HCT116 (cell line): ENCODE measurements at regions of chr3 and their contacts with region 1.

Region 1: DNA sequence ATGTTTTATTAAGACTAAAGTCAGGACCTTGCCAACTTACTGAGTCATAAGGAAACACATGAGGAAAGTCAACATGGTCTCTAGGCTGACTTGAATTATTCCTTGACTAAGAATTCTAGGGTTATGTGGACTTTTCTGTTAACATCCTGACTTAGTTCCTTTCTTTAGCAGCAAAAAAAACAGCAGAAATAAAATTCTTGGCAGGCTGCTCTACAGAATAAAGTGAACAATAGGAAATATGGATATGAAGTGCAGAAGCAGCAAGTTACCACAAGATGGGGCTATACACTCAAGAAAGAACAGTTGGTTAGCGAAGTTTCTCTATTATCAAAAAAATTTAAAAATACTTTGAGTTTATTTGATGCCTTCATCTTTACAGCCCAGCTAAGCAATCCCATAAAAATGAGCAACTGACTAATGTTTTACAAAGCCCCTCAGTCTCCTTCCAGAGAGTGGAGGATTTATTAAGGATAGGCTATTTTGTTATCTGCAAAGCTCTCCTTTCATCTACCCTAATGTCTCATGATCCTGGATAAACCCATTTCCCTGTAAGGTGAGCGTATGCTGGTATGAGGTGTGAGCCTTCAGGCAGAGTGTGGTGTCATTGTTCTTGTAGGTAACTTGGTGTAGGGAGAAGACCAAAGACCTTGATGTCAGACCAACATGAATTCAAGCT is 23.1 kb upstream of the MCCC1 start:
- DNase-seq: peak; percentile 38
- ATAC-seq: peak; percentile 67
- H3K4me3 ChIP-seq: no peak overlapping the region
- H3K27ac ChIP-seq: no peak overlapping the region
- H3K4me1 ChIP-seq: no peaks in the 10 kb centered on the region
- H3K27me3 ChIP-seq: peaks cover 1% of the 10 kb centered on the region; the same call in 1 of the 2 replicates
- CTCF ChIP-seq: peak; percentile 67 to 88 (median 87)
- POLR2A ChIP-seq: no peak
- RAD21 ChIP-seq: peak; percentile 93

Region 2: DNA sequence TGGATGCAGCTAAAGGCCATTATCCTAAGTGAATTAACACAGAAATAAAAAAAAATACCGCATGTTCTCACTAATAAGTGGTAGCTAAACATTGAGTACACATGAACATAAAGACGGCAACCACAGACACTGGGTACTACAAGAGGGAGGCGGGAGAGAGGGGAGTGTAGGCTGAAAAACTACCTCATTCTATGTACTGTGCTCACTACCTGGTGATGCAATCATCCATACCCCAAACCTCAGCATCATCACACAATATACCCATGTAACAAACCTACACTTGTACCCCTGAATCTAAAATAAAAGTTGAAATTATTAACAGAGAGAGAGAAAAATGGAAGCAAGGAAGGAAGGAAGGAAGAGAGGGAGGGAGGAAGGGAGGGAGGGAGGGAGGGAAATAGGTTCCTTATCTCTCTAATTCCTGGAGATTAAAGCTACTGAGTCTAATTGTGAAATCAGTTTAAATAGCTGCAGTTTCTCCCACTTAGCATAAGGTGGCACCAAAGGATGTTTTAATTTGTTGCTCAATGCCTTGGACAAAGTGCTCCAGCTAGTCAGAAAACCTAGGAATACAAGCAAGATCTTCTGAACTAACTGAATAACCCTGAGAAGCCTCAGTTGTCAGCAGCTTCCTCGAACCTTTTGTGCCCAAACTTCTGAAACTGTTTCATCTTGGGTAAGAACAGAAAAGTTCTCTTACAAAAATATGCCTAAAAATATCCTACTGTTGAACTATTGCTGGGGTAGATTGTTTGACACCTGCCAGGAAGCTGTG is 408.5 kb before region 1 on chr3:
- CTCF ChIA-PET with region 1: interaction called, 5 read pairs
- POLR2A ChIA-PET with region 1: no interaction called
- RAD21 ChIA-PET with region 1: no interaction called
- intact Hi-C with region 1: loop called (anchors 1 kb)
- DNase-seq: peak; percentile 60
- ATAC-seq: peak; percentile 79
- H3K4me3 ChIP-seq: no peak overlapping the region
- H3K27ac ChIP-seq: no peak overlapping the region
- H3K4me1 ChIP-seq: no peaks in the 10 kb centered on the region
- H3K27me3 ChIP-seq: no peaks in the 10 kb centered on the region
- CTCF ChIP-seq: peak; percentile 57 to 66 (median 58); a peak in 5 of 6 replicates
- POLR2A ChIP-seq: no peak
- RAD21 ChIP-seq: peak; percentile 91

Region 3: GRCh38 chr3:183013856-183014255 is 108.5 kb before region 1 on chr3:
- CTCF ChIA-PET with region 1: no interaction called
- POLR2A ChIA-PET with region 1: no interaction called
- RAD21 ChIA-PET with region 1: no interaction called
- intact Hi-C with region 1: no loop called
- DNase-seq: no peak
- ATAC-seq: no peak
- H3K4me3 ChIP-seq: no peak overlapping the region
- H3K27ac ChIP-seq: no peak overlapping the region
- H3K4me1 ChIP-seq: no peaks in the 10 kb centered on the region
- H3K27me3 ChIP-seq: no peaks in the 10 kb centered on the region
- CTCF ChIP-seq: no peak
- POLR2A ChIP-seq: no peak
- RAD21 ChIP-seq: no peak

Region 4: GRCh38 chr3:183178629-183179549 is 56.5 kb after region 1 on chr3:
- CTCF ChIA-PET with region 1: interaction called, 11 read pairs
- POLR2A ChIA-PET with region 1: no interaction called
- RAD21 ChIA-PET with region 1: interaction called in 1 of 2 experiments, 5 read pairs
- intact Hi-C with region 1: loop called (anchors 1 kb)
- DNase-seq: no peak
- ATAC-seq: peak; percentile 86
- H3K4me3 ChIP-seq: peak overlapping the region; percentile 52 to 62
- H3K27ac ChIP-seq: no peak overlapping the region
- H3K4me1 ChIP-seq: peaks cover 6 to 10% of the 10 kb centered on the region in 2 experiments; a peak in 2 of 4 replicates
- H3K27me3 ChIP-seq: no peaks in the 10 kb centered on the region
- CTCF ChIP-seq: peak; percentile 23 to 38 (median 31); a peak in 3 of 6 replicates
- POLR2A ChIP-seq: no peak
- RAD21 ChIP-seq: peak; percentile 31; the same call in 1 of the 2 replicates

Region 5: DNA sequence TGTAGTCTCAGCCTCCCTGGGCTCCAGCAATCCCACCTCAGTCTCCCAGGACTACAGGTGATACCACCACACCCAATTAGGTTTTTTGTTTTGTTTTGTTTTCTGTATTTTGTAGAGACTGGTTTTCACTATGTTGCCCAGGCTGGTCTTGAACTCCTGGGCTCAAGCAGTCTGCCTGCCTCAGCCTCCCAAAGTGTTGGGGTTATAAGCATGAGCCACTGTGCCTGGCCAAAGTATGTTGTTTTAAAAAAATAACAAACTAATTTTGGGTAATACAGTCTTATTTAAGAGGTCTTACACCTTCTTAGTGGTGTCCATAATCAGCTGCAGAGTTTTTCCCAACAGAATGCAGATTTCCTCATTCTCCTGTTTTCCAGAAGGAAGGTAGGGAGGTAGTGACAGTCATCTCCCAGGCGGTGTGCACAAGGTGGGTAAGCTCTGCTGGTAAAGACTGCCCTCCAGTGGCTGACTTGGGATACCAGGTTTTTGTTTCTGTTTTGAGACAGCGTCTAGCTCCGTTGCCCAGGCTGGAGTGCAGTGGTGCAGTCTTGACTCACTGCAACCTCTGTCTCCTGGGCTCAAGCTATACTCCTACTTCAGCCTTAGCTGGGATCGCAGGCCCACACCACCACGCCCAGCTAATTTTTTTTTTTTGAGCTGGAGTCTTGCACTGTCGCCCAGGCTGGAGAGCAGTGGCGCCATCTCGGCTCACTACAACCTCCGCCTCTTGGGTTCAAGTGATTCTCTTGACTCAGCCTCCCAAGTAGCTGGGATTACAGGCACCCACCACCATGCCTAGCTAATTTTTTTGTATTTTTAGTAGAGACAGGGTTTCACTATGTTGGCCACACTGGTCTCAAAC is 644.6 kb after region 1 on chr3:
- CTCF ChIA-PET with region 1: interaction called, 3 read pairs
- POLR2A ChIA-PET with region 1: no interaction called
- RAD21 ChIA-PET with region 1: no interaction called
- intact Hi-C with region 1: loop called (anchors 1 kb)
- DNase-seq: peak; percentile 53
- ATAC-seq: peak; percentile 99
- H3K4me3 ChIP-seq: no peak overlapping the region
- H3K27ac ChIP-seq: no peak overlapping the region
- H3K4me1 ChIP-seq: no peaks in the 10 kb centered on the region
- H3K27me3 ChIP-seq: no peaks in the 10 kb centered on the region
- CTCF ChIP-seq: peak; percentile 70 to 81 (median 80)
- POLR2A ChIP-seq: no peak
- RAD21 ChIP-seq: peak; percentile 89

Region 6: GRCh38 chr3:183884427-183885296 is 762.3 kb after region 1 on chr3 and contains the start of gene PARL:
- CTCF ChIA-PET with region 1: no interaction called
- POLR2A ChIA-PET with region 1: no interaction called
- RAD21 ChIA-PET with region 1: no interaction called
- intact Hi-C with region 1: loop called (anchors 10 kb)
- DNase-seq: peak; percentile 83
- ATAC-seq: peak; percentile 98
- H3K4me3 ChIP-seq: peak within 1 kb of the TSS; percentile 99 to 100
- H3K27ac ChIP-seq: peak within 1 kb of the TSS; percentile 64
- H3K4me1 ChIP-seq: peaks cover 6 to 16% of the 10 kb centered on the region in 2 experiments; a peak in 3 of 4 replicates
- H3K27me3 ChIP-seq: no peaks in the 10 kb centered on the region
- CTCF ChIP-seq: peak; percentile 79 to 92 (median 90)
- POLR2A ChIP-seq: peak; percentile 64
- RAD21 ChIP-seq: peak; percentile 80
- total RNA-seq, gene PARL: 69.7 TPM